GM12878 (cell line): ENCODE measurements at regions of chr12 and their contacts with region 1.

Region 1: DNA sequence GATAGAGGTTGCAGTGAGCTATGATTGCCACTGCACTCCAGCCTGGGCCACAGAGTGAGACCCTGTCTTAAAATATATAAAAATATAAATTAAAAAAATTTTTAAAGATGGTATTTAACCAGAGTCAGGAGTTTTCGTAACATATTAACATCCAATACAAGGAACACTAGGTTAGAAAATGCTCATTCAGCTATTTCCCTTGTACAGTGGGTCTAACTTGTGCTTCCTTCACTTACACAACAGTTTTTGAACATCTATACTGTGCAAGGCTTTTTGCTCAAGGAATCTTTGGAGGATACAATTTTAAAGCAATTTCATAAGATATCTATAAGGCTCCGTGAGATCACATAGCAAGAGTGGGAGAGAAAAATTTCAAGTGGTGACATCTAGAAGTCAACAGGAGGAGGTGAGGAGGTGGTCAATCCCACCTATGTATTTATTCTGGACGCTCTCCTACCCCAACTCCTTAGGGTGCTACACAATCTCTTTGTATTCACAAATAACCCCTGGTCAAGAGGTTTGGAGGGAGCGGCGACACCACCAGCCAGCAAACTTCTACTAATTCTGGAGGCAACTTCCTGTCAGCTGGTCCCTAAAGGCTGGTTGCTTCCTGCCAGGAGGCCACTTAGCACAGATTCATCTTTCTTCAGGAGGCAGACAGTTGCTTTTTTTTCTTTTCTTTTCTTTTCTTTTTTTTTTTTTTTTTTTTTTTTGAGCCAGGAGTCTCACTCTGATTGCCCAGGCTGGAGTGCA is 22.2 kb downstream of the DUSP16 start:
- DNase-seq: no peak
- ATAC-seq: peak; percentile 50
- H3K4me3 ChIP-seq: no peak overlapping the region
- H3K27ac ChIP-seq: peak overlapping the region; percentile 30
- H3K4me1 ChIP-seq: peaks cover 15% of the 10 kb centered on the region
- H3K27me3 ChIP-seq: no peaks in the 10 kb centered on the region
- CTCF ChIP-seq: no peak
- EP300 ChIP-seq: no peak
- POLR2A ChIP-seq: no peak
- RAD21 ChIP-seq: no peak

Region 2: GRCh38 chr12:12521044-12521485 is 19.4 kb before region 1 on chr12:
- CTCF ChIA-PET with region 1: interaction called, 7 read pairs
- POLR2A ChIA-PET with region 1: interaction called, 5 read pairs
- RAD21 ChIA-PET with region 1: interaction called, 3 read pairs
- SMC1A ChIA-PET with region 1: interaction called, 29 read pairs
- in situ Hi-C with region 1: no loop called
- intact Hi-C with region 1: no loop called
- DNase-seq: no peak
- ATAC-seq: no peak
- H3K4me3 ChIP-seq: no peak overlapping the region
- H3K27ac ChIP-seq: no peak overlapping the region
- H3K4me1 ChIP-seq: no peaks in the 10 kb centered on the region
- H3K27me3 ChIP-seq: no peaks in the 10 kb centered on the region
- CTCF ChIP-seq: no peak
- EP300 ChIP-seq: no peak
- POLR2A ChIP-seq: no peak
- RAD21 ChIP-seq: no peak

Region 3: DNA sequence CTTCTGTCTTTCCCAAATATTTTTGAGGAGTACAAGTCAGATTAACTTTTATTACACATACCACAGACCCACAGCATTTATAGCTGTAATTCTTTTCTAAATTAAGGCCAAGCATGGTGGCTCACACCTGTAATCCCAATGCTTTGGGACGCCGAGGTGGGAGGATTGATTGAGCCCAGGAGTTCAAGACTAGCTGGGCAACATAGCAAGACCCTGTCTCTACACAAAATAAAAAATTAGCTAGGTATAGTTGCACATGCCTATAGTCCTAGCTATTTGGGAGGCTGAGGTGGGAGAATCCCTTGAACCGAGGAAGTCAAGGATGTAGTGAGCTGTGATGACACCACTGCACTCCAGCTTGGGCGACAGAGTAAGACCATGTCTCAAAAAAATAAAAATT is 15.2 kb after region 1 on chr12:
- CTCF ChIA-PET with region 1: interaction called, 7 read pairs
- POLR2A ChIA-PET with region 1: interaction called, 11 read pairs
- RAD21 ChIA-PET with region 1: interaction called, 11 read pairs
- SMC1A ChIA-PET with region 1: interaction called, 22 read pairs
- in situ Hi-C with region 1: no loop called
- intact Hi-C with region 1: no loop called
- DNase-seq: no peak
- ATAC-seq: no peak
- H3K4me3 ChIP-seq: no peak overlapping the region
- H3K27ac ChIP-seq: no peak overlapping the region
- H3K4me1 ChIP-seq: peaks cover 16% of the 10 kb centered on the region
- H3K27me3 ChIP-seq: no peaks in the 10 kb centered on the region
- CTCF ChIP-seq: no peak
- EP300 ChIP-seq: no peak
- POLR2A ChIP-seq: no peak
- RAD21 ChIP-seq: no peak